ENCODE measurements at regions of chr4 and their contacts with region 1.

Region 1: DNA sequence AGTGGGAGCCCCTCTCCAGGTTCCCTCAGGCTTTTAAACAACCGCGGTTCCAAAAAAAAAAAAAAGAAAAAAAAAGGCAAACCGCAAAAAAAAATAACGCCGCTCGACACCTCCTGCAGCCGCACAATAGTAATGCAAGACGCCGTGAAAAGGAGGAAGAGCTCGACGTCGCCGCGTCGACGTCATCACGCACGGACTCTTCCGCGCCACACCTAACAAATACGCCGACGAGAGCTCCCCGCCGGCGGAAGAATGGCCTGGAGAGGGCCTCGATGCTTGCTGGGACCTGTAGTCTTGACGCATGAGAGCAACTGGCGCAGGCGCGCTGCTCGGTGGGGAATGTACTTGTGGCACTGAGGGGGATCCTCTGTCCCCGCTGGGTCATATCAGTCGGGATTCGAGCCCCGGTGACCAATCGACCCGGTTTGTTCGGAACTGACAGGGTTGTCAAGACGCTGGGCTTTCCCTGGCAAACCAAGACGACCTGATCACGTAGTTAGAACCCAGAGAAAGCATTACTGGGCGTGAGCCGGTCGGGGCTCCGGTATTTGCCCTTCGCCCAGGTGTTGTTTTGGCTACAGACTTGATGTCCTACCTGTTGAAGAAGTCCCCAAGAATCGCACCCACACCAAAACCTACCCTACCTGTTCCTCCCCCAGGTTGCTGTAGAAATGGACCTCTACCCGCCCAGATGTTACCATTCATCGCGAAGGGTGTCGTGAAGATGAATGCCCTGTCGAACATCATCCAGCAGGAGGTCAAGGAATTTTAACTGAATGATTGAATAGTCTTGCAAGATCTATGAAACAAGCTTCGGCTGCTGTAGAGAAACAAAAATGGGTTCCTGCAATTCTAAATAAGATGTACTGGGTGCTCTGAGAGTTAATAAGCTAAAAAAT is at the start of gene CBR4:
- DNase-seq: peak; percentile 97
- ATAC-seq: peak; percentile 94 to 98
- H3K4me3 ChIP-seq: peak within 1 kb of the TSS; percentile 79 to 89 (median 86)
- H3K27ac ChIP-seq: peak within 1 kb of the TSS; percentile 94 to 98 (median 97)
- H3K4me1 ChIP-seq: peaks cover 28 to 32% of the 10 kb centered on the region in 2 donors
- H3K27me3 ChIP-seq: no peaks in the 10 kb centered on the region
- CTCF ChIP-seq: peak in 4 of 5 experiments; percentile 24 to 48 (median 30)
- POLR2A ChIP-seq: peak; percentile 86 to 93
- total RNA-seq, gene CBR4: 11.5 to 21.0 (median 17.5) TPM

Region 2: GRCh38 chr4:168480931-168481611 is 529.3 kb before region 1 on chr4:
- in situ Hi-C with region 1: no loop called
- intact Hi-C with region 1: loop called (anchors 10 kb)
- DNase-seq: peak in 1 of 2 donors; percentile 45
- ATAC-seq: peak; percentile 65 to 84
- H3K4me3 ChIP-seq: peak overlapping the region; percentile 72 to 96 (median 79)
- H3K27ac ChIP-seq: peak overlapping the region; percentile 87 to 91 (median 88)
- H3K4me1 ChIP-seq: peaks cover 11 to 21% of the 10 kb centered on the region in 2 donors
- H3K27me3 ChIP-seq: no peaks in the 10 kb centered on the region
- CTCF ChIP-seq: no peak
- POLR2A ChIP-seq: no peak

Region 3: GRCh38 chr4:168528131-168528949 is 482.0 kb before region 1 on chr4:
- in situ Hi-C with region 1: no loop called
- intact Hi-C with region 1: no loop called
- DNase-seq: no peak
- ATAC-seq: no peak
- H3K4me3 ChIP-seq: no peak overlapping the region
- H3K27ac ChIP-seq: peak overlapping the region in 1 of 4 donors; percentile 9
- H3K4me1 ChIP-seq: peaks cover 0 to 33% of the 10 kb centered on the region in 2 donors
- H3K27me3 ChIP-seq: no peaks in the 10 kb centered on the region
- CTCF ChIP-seq: no peak
- POLR2A ChIP-seq: no peak

Region 4: DNA sequence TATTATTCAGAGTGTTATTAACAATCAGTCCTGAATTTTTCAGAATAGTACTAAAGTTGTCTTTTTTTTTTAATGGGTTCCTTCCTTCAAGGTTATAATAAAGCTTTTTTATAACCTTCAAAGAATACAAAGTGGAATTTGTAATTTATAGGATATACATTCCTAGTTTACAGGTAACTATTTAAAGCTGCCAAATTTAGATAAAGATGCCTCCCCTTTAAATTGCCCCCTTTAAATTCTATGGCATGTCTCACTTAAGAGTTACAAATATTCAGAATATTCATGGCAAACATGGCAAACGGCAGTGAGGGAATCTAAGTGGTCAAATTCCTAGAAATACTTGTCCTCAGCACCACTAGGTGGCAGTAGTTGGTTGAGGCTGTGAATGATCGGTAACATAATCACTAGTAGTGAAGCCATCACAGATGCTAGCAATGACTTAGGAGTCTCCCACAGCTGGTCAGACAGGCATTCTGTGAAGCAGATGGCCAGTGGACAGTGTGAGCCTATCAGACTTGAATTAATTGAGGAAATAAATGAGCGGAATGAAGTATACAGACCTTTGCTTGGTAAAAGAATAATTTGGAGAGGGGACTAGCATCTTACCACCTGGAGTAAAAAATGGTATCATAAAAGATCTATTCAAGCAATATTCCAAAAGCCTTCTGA is 86.7 kb before region 1 on chr4:
- in situ Hi-C with region 1: no loop called
- intact Hi-C with region 1: loop called (anchors 5 kb)
- DNase-seq: peak in 1 of 2 donors; percentile 25
- ATAC-seq: peak; percentile 45 to 78
- H3K4me3 ChIP-seq: no peak overlapping the region
- H3K27ac ChIP-seq: no peak overlapping the region
- H3K4me1 ChIP-seq: peaks cover 0 to 6% of the 10 kb centered on the region in 2 donors
- H3K27me3 ChIP-seq: no peaks in the 10 kb centered on the region
- CTCF ChIP-seq: peak; percentile 71 to 80 (median 73)
- POLR2A ChIP-seq: no peak

Region 5: DNA sequence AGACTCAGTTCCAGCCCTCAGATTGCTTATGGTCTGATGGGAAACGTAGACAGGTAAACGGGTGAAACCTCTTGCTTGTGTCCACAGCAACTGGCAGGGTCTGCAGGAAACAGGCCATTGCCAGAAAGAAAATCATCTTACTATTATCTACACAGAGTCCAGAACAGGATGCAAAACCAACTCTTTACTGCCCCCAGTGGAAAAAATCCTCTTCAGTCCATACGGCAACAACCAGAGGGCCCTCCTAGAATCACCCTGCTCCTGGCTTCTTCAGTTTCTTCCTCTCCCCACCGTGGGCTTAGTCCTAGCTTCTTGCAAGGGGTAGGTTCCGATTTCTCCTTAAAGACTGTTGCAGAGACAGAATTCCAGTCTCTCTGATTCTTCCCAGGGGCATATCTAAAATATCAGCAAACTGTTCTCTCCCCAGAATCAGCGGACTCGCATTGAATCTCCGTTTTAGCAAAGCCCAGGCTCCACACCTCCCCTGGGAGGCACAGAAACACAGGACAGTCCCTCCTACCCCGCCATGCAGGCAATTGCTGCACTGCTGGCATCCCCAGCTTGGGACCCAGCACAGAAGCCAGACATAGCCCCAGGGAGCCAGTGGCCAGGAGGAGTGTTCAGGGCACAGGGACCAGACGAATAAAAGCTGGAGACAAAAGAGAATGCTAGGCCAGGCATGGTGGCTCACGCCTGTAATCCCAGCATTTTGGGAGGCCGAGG is 301.4 kb after region 1 on chr4:
- in situ Hi-C with region 1: no loop called
- intact Hi-C with region 1: loop called (anchors 5 kb)
- DNase-seq: no peak
- ATAC-seq: peak; percentile 59 to 73
- H3K4me3 ChIP-seq: no peak overlapping the region
- H3K27ac ChIP-seq: peak overlapping the region in 1 of 4 donors; percentile 22
- H3K4me1 ChIP-seq: peaks cover 13 to 18% of the 10 kb centered on the region in 2 donors
- H3K27me3 ChIP-seq: no peaks in the 10 kb centered on the region
- CTCF ChIP-seq: peak in 4 of 5 experiments; percentile 27 to 60 (median 48)
- POLR2A ChIP-seq: no peak

Region 6: GRCh38 chr4:170027181-170027829 is 1016.9 kb after region 1 on chr4:
- in situ Hi-C with region 1: no loop called
- intact Hi-C with region 1: loop called (anchors 5 kb)
- DNase-seq: peak; percentile 88 to 90
- ATAC-seq: peak; percentile 88 to 90
- H3K4me3 ChIP-seq: peak overlapping the region; percentile 74 to 91 (median 88)
- H3K27ac ChIP-seq: peak overlapping the region; percentile 90 to 93 (median 92)
- H3K4me1 ChIP-seq: peaks cover 8 to 18% of the 10 kb centered on the region in 2 donors
- H3K27me3 ChIP-seq: no peaks in the 10 kb centered on the region
- CTCF ChIP-seq: peak in 2 of 5 experiments; percentile 18 to 21
- POLR2A ChIP-seq: no peak